ENCODE measurements at regions of chr6 and their contacts with region 1.

Region 1: DNA sequence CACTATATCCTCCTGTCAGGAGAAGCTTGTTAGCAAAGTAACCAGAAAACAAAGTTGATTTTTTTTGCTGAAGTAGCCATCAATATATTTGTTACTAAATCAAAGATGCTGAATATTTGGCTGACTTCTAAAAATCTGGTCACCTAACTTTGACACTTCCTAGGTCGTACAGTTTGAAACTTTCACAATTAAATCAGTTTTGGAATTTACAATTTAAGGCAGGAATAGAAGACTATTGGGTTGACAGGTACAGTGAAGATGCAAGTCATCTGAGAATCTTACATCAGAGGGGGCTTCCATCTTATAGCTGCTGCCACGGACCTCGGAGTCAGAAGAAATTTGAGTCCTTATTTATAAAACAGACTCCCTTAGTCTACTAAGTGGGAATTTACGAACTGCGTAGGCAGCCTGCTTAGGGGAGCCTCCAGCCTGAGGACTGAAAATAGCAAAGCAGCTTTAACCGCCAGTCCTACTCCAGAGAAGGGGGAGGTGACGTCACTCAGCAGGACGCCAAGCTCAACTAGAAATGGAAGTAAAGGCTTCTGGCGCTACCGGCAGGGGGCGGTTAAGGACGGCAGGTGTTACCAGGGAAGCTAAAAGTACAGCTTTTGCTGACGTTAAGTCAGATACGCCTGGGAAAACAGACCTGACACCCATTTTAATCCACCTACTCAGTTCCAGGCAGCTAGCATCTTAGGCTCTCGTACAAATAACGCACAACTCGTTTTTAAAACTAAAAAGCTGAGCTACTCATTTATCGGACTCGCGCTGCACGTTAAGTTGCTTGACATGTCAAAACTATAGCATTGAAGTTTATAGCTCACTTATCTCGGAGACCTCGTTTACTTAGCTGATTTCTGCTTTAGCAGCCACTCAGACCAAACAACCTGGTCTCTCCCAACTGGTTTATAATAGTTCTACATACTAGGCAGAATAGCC is 61.1 kb upstream of the HFE start:
- DNase-seq: peak; percentile 90
- ATAC-seq: peak; percentile 40
- H3K4me3 ChIP-seq: peak overlapping the region; percentile 95 to 96
- H3K27ac ChIP-seq: peak overlapping the region; percentile 100
- H3K4me1 ChIP-seq: peaks cover 57% of the 10 kb centered on the region
- H3K27me3 ChIP-seq: no peaks in the 10 kb centered on the region
- CTCF ChIP-seq: peak; percentile 90

Region 2: DNA sequence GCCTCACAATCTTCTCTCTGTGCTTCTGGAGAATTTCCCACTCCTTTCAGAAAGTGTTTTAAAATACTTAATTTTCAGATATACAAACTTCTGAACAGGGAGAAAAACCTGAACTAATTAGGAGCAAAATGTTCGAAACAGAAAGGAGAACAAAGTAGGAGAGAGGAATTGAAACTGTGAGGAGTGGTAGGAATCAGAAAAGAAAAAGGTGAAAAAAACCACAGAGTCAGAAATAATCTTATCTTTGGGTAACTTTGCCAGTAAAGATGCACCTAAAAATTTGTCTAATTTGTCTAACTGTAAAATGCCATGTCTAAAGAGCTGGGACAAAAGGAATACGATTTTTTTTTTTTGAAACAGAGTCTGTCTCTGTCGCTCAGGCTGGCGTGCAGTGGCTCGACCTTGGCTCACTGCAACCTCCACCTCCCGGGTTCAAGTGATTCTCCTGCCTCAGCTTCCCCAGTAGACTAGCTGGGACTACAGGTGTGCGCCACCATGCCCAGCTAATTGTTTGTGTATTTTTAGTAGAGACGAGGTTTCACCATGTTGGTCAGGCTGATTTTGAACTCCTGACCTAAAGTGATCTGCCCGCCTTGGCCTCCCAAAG is 1085.7 kb before region 1 on chr6:
- CTCF ChIA-PET with region 1: no interaction called
- POLR2A ChIA-PET with region 1: no interaction called
- in situ Hi-C with region 1: no loop called
- intact Hi-C with region 1: no loop called
- DNase-seq: no peak
- ATAC-seq: no peak
- H3K4me3 ChIP-seq: no peak overlapping the region
- H3K27ac ChIP-seq: no peak overlapping the region
- H3K4me1 ChIP-seq: no peaks in the 10 kb centered on the region
- H3K27me3 ChIP-seq: peaks cover under 1% of the 10 kb centered on the region
- CTCF ChIP-seq: no peak

Region 3: GRCh38 chr6:26045065-26045927 is 19.1 kb after region 1 on chr6:
- CTCF ChIA-PET with region 1: interaction called, 9 read pairs
- POLR2A ChIA-PET with region 1: interaction called, 207 read pairs
- in situ Hi-C with region 1: no loop called
- intact Hi-C with region 1: loop called (anchors 2 kb)
- DNase-seq: peak; percentile 98
- ATAC-seq: peak; percentile 69
- H3K4me3 ChIP-seq: peak overlapping the region; percentile 52 to 60
- H3K27ac ChIP-seq: peak overlapping the region; percentile 99
- H3K4me1 ChIP-seq: peaks cover 36% of the 10 kb centered on the region
- H3K27me3 ChIP-seq: no peaks in the 10 kb centered on the region
- CTCF ChIP-seq: peak; percentile 44

Region 4: DNA sequence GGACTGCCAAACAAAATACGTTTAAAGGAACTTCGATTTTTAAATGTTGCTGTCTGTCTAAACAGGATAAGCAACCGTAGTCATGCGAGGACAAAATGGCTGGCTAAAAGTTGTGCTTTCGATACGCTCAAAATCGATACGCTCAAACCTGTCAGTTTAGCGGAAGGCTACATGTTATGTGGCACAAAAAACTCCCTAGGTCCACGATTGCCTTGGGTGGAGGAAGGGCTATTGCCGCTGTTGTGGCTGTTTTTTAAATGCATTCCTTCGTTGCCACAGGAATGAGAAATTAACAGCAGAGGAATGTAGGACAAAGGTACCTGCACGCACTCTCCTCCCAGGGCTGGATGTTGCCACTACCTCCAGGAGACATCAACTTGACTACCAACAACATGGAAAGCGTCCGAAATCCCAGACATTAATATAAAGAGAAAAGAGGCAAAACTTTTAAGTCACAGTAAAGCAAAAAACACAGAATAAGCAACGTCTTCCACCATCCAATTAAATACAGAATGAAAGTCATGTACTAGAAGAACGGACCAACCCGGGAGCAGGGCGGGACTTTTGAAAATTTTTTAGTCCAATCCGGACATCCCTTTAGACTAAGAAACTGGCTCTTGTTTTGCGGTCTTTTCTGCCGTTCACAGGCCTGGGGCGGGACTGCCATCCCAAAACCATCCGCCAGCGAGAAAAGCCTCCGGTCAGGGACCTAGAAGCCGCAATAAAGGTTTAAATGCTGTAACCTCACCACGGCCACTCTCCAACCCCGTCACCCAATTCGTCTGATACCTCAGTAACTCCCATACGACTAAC is 28.9 kb after region 1 on chr6:
- CTCF ChIA-PET with region 1: interaction called, 3 read pairs
- POLR2A ChIA-PET with region 1: interaction called, 14 read pairs
- in situ Hi-C with region 1: no loop called
- intact Hi-C with region 1: no loop called
- DNase-seq: no peak
- ATAC-seq: peak; percentile 81
- H3K4me3 ChIP-seq: peak overlapping the region; percentile 80 to 92
- H3K27ac ChIP-seq: peak overlapping the region; percentile 100
- H3K4me1 ChIP-seq: peaks cover 18% of the 10 kb centered on the region
- H3K27me3 ChIP-seq: no peaks in the 10 kb centered on the region
- CTCF ChIP-seq: no peak

Region 5: DNA sequence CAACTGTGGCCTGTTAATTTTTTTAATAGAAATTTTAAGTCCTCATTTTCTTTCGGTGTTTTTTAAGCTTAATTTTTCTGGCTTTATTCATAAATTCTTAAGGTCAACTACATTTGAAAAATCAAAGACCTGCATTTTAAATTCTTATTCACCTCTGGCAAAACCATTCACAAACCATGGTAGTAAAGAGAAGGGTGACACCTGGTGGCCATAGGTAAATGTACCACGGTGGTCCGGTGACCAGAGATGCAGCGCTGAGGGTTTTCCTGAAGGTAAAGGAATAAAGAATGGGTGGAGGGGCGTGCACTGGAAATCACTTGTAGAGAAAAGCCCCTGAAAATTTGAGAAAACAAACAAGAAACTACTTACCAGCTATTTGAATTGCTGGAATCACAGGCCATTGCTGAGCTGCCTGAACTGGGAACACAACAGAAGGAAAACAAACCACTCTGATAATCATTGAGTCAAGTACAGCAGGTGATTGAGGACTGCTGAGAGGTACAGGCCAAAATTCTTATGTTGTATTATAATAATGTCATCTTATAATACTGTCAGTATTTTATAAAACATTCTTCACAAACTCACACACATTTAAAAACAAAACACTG is 71.2 kb after region 1 on chr6:
- CTCF ChIA-PET with region 1: no interaction called
- POLR2A ChIA-PET with region 1: interaction called, 12 read pairs
- in situ Hi-C with region 1: no loop called
- intact Hi-C with region 1: no loop called
- DNase-seq: no peak
- ATAC-seq: peak; percentile 95
- H3K4me3 ChIP-seq: no peak overlapping the region
- H3K27ac ChIP-seq: no peak overlapping the region
- H3K4me1 ChIP-seq: no peaks in the 10 kb centered on the region; the same call in 1 of the 2 replicates
- H3K27me3 ChIP-seq: no peaks in the 10 kb centered on the region
- CTCF ChIP-seq: peak; percentile 82

Region 6: DNA sequence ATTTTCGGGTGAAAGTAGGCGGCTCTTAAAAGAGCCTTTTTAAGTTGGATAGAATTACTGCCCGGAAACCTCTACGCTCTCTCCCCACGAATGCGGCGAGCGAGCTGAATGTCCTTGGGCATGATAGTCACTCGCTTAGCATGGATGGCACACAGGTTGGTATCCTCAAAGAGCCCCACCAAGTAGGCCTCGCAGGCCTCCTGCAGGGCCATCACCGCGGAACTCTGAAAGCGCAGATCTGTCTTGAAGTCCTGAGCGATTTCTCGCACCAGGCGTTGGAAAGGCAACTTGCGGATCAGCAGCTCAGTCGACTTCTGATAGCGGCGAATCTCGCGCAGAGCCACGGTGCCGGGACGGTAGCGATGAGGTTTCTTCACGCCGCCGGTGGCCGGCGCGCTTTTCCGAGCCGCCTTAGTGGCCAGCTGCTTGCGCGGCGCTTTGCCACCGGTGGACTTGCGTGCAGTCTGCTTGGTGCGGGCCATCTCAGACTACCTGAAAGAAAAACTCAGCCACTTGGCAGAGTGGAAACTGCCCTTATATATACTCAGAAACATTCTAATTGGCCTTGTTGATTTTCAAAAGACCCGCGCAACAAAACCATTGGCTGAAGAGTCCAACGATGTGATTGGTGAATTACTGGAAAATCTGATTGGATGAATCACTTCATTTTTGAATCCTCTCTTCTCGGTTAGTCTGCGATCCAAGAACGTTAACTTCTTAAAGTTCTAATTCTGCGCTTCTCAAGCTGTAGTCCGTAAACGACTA is 244.9 kb after region 1 on chr6:
- CTCF ChIA-PET with region 1: no interaction called
- POLR2A ChIA-PET with region 1: interaction called, 18 read pairs
- in situ Hi-C with region 1: no loop called
- intact Hi-C with region 1: no loop called
- DNase-seq: no peak
- ATAC-seq: no peak
- H3K4me3 ChIP-seq: peak overlapping the region in 1 of 2 experiments; percentile 61; a peak in 1 of 4 replicates
- H3K27ac ChIP-seq: peak overlapping the region; percentile 89
- H3K4me1 ChIP-seq: peaks cover 7% of the 10 kb centered on the region
- H3K27me3 ChIP-seq: no peaks in the 10 kb centered on the region
- CTCF ChIP-seq: no peak

Region 7: DNA sequence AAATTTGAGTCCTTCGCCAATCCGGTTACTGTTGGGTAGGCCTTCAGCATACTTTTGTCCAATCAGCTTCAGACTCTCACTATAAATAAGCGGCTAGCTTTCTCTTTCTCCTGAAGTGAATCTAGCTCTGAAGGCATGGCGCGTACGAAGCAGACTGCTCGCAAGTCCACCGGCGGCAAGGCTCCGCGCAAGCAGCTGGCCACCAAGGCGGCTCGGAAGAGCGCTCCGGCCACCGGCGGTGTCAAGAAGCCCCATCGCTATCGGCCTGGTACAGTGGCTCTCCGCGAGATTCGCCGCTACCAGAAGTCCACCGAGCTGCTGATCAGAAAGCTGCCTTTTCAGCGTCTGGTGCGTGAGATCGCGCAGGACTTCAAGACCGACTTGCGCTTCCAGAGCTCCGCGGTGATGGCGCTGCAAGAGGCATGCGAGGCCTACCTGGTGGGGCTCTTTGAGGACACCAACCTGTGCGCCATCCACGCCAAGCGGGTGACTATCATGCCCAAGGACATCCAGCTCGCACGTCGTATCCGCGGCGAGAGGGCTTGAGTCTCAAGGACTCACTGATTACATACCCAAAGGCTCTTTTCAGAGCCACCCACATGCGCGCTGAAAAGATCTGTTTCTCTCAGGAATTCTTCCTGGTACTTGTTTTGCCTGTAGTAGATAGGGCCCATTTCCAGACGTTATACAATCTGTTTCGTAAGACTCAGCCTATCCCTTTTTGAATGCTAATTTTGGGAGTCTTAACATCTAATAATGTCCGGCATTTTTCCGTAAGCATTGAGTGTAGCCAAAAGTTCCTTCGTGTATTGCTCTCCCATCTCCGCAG is 1784.0 kb after region 1 on chr6:
- CTCF ChIA-PET with region 1: no interaction called
- POLR2A ChIA-PET with region 1: no interaction called
- in situ Hi-C with region 1: no loop called
- intact Hi-C with region 1: loop called (anchors 2 kb)
- DNase-seq: peak; percentile 96
- ATAC-seq: peak; percentile 44
- H3K4me3 ChIP-seq: peak overlapping the region; percentile 78 to 93
- H3K27ac ChIP-seq: peak overlapping the region; percentile 100
- H3K4me1 ChIP-seq: peaks cover 17% of the 10 kb centered on the region
- H3K27me3 ChIP-seq: no peaks in the 10 kb centered on the region
- CTCF ChIP-seq: no peak

Measured in Panc1 (cell line).